ENCODE measurements at regions of chr19 and their contacts with region 1.

Region 1: DNA sequence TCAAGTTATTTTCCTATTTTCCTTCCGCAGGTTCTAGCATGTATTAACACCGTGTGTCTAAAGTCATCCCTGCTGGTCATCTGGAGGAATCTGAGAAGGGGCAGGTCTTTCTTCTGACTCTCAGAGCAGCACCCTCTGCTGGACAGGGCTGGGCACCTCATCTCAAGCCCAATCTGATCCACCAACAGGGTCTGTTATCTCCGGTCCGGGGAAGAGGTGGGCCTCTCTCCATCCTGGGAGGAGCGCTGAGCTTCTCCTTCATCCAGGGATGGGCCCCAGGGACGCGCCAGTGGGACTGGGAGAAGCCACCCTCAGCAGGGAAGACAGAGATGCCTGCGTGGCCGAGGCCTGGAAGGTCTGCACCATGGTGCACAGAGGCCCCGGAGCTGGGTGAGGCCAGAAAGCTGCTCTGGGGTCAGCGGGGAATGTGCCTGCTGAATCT is 26.0 kb upstream of the ZNF331 start:
- DNase-seq: peak; percentile 44 to 58 (median 49)
- H3K4me3 ChIP-seq: no peak overlapping the region
- H3K4me3 Mint-ChIP-seq: no peak overlapping the region
- H3K27ac ChIP-seq: no peak overlapping the region
- H3K27ac Mint-ChIP-seq: no peak overlapping the region
- H3K4me1 ChIP-seq: no peaks in the 10 kb centered on the region
- H3K4me1 Mint-ChIP-seq: no peaks in the 10 kb centered on the region
- H3K27me3 ChIP-seq: peaks cover 0 to 2% of the 10 kb centered on the region in 2 donors
- H3K27me3 Mint-ChIP-seq: peaks cover 0 to 6% (median 4%) of the 10 kb centered on the region in 3 donors
- CTCF ChIP-seq: peak; percentile 76

Region 2: GRCh38 chr19:53103198-53103944 is 408.6 kb before region 1 on chr19 and contains the start of gene ZNF160:
- intact Hi-C with region 1: no loop called
- DNase-seq: peak; percentile 92 to 97 (median 92)
- H3K4me3 ChIP-seq: peak within 1 kb of the TSS; percentile 57 to 95 (median 93)
- H3K4me3 Mint-ChIP-seq: peak within 1 kb of the TSS; percentile 90 to 92
- H3K27ac ChIP-seq: peak within 1 kb of the TSS; percentile 89 to 93
- H3K27ac Mint-ChIP-seq: peak within 1 kb of the TSS; percentile 86 to 96 (median 93)
- H3K4me1 ChIP-seq: peaks cover 19 to 24% of the 10 kb centered on the region in 2 donors
- H3K4me1 Mint-ChIP-seq: peaks cover 17% of the 10 kb centered on the region
- H3K27me3 ChIP-seq: no peaks in the 10 kb centered on the region
- H3K27me3 Mint-ChIP-seq: peaks cover 2 to 9% (median 4%) of the 10 kb centered on the region in 3 donors
- CTCF ChIP-seq: no peak
- polyA plus RNA-seq, gene ZNF160: 6.4 to 24.5 (median 7.7) TPM

Region 3: DNA sequence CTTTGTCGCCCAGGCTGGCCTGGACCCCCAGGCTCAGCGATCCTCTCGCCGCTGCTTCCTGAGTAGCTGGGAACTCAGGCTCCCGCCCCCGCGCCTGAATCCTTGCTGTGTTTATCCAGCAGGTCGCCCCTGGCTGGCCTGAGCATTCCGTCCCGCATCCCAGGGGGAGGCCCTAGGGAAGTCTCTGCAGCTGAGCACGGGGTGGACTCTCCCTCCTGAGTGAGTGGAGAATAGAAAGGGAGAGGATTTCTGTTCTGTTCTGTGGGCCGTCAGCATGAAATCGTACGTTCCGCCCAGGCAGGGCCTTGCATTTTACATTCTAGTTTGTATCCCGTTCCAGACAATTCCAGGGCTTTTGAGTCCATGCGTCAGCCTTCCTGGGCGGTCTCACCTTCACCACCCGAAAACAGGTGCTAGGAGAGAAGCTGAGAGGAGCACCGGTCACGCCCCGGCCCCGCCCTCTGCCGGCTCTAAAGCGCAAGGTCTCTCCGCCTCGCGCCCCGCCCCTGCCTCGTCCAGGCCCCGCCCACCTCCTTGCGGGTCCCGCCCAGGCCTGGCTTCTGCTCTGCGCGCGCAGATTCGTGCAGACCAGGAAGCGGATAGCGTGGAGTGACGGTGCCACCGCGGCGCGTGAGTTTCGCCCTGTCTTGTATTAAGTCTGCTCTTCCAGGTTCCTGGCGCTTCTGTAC is 80.4 kb before region 1 on chr19 and contains the start of gene ZNF761:
- intact Hi-C with region 1: loop called in 1 of 2 experiments (anchors 10 kb)
- DNase-seq: peak; percentile 91 to 92 (median 92)
- H3K4me3 ChIP-seq: peak within 1 kb of the TSS; percentile 55 to 94 (median 91)
- H3K4me3 Mint-ChIP-seq: peak within 1 kb of the TSS; percentile 93 to 96
- H3K27ac ChIP-seq: peak within 1 kb of the TSS; percentile 66 to 93
- H3K27ac Mint-ChIP-seq: peak within 1 kb of the TSS; percentile 93 to 96 (median 94)
- H3K4me1 ChIP-seq: peaks cover 18 to 20% of the 10 kb centered on the region in 2 donors
- H3K4me1 Mint-ChIP-seq: peaks cover 19% of the 10 kb centered on the region
- H3K27me3 ChIP-seq: peaks cover 0 to 4% of the 10 kb centered on the region in 2 donors
- H3K27me3 Mint-ChIP-seq: peaks cover 1 to 9% (median 6%) of the 10 kb centered on the region in 3 donors
- CTCF ChIP-seq: peak; percentile 59
- polyA plus RNA-seq, gene ZNF761: 3.4 to 6.1 (median 5.6) TPM

Region 4: DNA sequence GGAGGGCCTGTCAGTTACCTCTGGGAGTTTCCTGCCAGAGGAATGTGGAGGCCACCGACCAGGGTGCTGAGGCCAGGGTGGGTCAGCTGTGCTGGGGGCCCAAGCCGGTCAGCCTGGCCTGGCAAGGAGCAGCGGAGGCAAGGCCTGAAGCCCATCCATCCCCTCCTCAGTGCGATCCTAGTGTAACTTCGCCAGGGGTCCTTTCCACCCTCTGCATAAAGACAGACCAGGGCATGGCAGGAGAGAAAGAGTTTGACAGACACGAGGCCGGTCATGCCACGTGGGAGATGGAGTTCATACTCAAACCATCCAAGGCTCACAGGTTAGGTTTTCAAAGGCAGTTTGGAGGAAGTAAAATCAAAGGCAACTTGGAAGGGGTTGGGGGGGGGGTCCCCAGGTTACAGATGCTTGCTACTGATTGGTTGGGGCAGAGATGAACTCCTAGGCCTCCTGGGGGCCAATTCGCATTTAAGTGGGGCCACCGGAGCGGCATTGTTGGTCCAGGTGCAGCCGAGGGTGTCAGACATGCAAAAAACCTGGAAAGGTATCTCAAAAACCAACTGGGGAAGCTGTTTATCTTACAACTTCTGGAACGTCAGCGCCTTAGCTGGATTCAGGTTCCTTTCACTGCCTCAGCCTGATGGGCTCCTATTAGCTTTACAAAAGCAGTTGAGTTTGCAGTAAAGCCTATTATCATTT is 83.0 kb after region 1 on chr19:
- intact Hi-C with region 1: no loop called
- DNase-seq: no peak
- H3K4me3 ChIP-seq: no peak overlapping the region
- H3K4me3 Mint-ChIP-seq: no peak overlapping the region
- H3K27ac ChIP-seq: no peak overlapping the region
- H3K27ac Mint-ChIP-seq: no peak overlapping the region
- H3K4me1 ChIP-seq: no peaks in the 10 kb centered on the region
- H3K4me1 Mint-ChIP-seq: no peaks in the 10 kb centered on the region
- H3K27me3 ChIP-seq: no peaks in the 10 kb centered on the region
- H3K27me3 Mint-ChIP-seq: peaks cover 0 to 2% (median 0%) of the 10 kb centered on the region in 3 donors
- CTCF ChIP-seq: no peak